Activated naive CD4-positive, alpha-beta T cell treated with anti-CD3 and anti-CD28 coated beads for 36 hours (primary cell): ENCODE measurements at regions of chr19 and their contacts with region 1.

Region 1: GRCh38 chr19:45692187-45693105 is at the start of gene QPCTL:
- DNase-seq: peak; percentile 98
- H3K4me3 Mint-ChIP-seq: peak within 1 kb of the TSS; percentile 97
- H3K27ac Mint-ChIP-seq: peak within 1 kb of the TSS; percentile 98
- H3K4me1 Mint-ChIP-seq: peaks cover 34% of the 10 kb centered on the region
- H3K27me3 Mint-ChIP-seq: no peaks in the 10 kb centered on the region
- total RNA-seq, gene QPCTL: 12.0 to 14.1 TPM

Region 2: DNA sequence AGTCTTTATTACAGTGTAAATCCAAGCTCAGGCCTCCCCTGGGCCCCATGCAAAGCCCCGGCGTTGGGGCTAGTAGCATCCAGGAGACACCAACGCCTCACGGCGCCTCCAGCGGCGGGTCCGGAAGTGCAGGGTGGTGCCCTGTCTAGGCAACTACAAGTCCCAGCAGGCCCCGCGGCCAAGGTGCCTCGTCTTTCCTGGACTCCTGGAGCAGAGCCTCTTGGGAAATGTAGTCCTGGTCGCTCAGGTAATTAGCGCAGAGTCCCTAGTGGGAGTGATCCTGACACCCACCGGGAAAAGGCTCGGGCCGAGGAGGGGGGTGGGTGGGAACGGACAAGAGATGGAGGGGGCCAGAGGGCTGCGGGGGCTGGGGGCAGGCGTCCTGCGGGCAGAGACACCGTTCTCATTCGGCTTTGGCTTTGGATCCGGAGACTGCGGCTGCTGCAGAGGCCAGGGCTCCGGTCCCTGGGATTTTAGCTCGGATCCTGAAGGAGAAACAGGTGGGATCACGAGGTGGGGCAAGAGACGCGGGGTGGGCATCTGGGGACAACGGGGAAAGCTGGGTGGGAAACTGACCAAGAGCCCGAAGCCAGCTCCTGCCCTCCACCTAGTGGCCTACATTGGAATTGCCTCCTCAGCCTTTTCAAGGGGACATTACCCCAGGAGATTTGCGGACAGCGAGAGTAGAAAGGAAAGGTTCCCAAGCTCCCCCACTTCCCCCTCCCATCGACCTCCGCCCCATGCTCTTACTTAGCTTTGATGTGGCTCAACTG is 207.0 kb before region 1 on chr19:
- CTCF ChIA-PET with region 1: interaction called, 3 read pairs
- intact Hi-C with region 1: loop called (anchors 1 kb)
- DNase-seq: peak; percentile 99
- H3K4me3 Mint-ChIP-seq: peak overlapping the region; percentile 81
- H3K27ac Mint-ChIP-seq: peak overlapping the region; percentile 46
- H3K4me1 Mint-ChIP-seq: peaks cover 4% of the 10 kb centered on the region
- H3K27me3 Mint-ChIP-seq: no peaks in the 10 kb centered on the region

Region 3: DNA sequence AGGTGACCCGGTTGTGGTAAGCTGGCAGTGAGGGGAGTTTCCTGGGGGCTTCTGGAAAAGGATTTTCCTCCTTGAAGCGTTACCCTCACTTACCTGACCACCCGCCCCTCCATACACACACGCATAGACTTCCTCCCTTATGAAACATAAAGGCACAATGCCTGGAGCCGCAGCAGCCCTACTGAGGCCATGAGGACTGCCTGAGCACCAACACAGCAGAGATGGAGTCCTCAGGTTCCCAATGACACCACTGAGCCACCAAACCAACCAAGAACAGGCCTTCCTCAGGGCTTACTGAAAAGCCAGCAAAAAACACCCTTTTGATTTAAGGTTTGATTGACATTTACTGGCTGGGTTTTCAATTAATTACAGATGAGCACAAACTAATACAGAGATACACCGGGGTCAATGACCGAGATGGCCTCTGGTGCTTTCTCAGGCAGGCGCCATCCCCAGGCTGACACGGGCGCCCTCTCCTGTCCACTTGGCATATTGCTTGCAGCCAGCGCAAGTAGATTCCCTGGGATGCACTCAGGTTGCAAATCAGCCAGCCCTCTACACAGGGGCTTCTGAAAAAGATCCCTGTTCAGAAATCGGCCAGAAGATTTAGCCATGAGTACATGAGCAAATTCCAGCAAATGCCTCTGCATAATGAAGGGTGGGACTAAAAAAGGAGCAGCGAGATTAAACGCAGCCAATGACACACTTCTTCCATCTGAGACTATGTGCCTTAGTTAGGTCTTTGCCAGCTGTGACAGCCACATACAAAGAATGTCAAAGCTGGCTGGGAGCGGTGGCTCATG is 122.6 kb before region 1 on chr19:
- CTCF ChIA-PET with region 1: no interaction called
- intact Hi-C with region 1: no loop called
- DNase-seq: peak; percentile 80
- H3K4me3 Mint-ChIP-seq: no peak overlapping the region
- H3K27ac Mint-ChIP-seq: peak overlapping the region; percentile 59
- H3K4me1 Mint-ChIP-seq: peaks cover 14% of the 10 kb centered on the region
- H3K27me3 Mint-ChIP-seq: no peaks in the 10 kb centered on the region

Region 4: GRCh38 chr19:45584332-45585157 is 107.9 kb before region 1 on chr19 and contains the start of gene OPA3:
- CTCF ChIA-PET with region 1: no interaction called
- intact Hi-C with region 1: loop called (anchors 1 kb)
- DNase-seq: peak; percentile 100
- H3K4me3 Mint-ChIP-seq: peak within 1 kb of the TSS; percentile 89
- H3K27ac Mint-ChIP-seq: peak within 1 kb of the TSS; percentile 98
- H3K4me1 Mint-ChIP-seq: peaks cover 14% of the 10 kb centered on the region
- H3K27me3 Mint-ChIP-seq: peaks cover 3% of the 10 kb centered on the region
- total RNA-seq, gene OPA3: 12.4 to 12.7 TPM

Region 5: GRCh38 chr19:45710356-45711130 is 18.1 kb after region 1 on chr19:
- CTCF ChIA-PET with region 1: interaction called, 28 read pairs
- intact Hi-C with region 1: no loop called
- DNase-seq: no peak
- H3K4me3 Mint-ChIP-seq: no peak overlapping the region
- H3K27ac Mint-ChIP-seq: no peak overlapping the region
- H3K4me1 Mint-ChIP-seq: peaks cover 22% of the 10 kb centered on the region
- H3K27me3 Mint-ChIP-seq: no peaks in the 10 kb centered on the region

Region 6: GRCh38 chr19:45770192-45771101 is 78.0 kb after region 1 on chr19:
- CTCF ChIA-PET with region 1: no interaction called
- intact Hi-C with region 1: loop called (anchors 1 kb)
- DNase-seq: peak; percentile 89
- H3K4me3 Mint-ChIP-seq: peak overlapping the region; percentile 81
- H3K27ac Mint-ChIP-seq: no peak overlapping the region
- H3K4me1 Mint-ChIP-seq: peaks cover 10% of the 10 kb centered on the region
- H3K27me3 Mint-ChIP-seq: peaks cover 16% of the 10 kb centered on the region

Region 7: DNA sequence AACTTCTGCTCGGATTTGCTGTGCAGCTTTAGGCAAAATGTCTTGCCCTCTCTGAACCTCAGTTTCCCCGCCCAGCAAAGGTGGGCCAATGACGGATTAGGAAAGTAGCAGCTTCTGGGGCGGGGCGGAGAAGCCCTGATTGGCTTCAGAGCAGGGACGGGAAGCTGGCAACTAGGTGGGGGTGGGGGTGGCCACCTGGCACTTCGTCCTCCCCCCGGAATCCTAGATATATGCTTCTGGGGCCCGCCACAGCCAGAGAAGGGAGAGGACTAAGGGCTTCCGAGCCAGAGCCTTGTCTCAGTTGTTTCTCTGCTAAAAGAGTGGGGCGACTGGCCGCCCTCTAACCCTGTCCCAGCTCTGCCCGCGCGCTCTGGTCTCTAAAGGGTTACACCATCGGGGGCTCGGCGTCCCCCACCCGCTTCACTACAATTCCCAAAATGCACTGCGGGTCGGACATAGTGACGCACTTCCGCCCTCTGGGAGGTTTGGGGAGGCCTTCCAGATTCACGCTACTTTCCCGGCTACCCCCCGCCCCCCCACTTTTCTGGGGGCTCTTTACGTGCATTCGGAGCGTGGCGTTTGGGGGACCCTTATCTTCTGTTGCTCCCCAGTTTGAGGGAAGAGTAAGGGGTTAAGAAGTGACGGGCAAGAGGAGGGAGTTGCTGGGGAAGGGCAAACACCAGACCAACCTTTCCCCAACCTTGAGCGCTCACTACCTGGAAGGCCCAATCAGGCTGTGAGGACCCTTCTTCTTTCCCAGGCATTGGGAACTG is 194.2 kb after region 1 on chr19:
- CTCF ChIA-PET with region 1: no interaction called
- intact Hi-C with region 1: loop called (anchors 1 kb)
- DNase-seq: peak; percentile 98
- H3K4me3 Mint-ChIP-seq: peak overlapping the region; percentile 94
- H3K27ac Mint-ChIP-seq: peak overlapping the region; percentile 95
- H3K4me1 Mint-ChIP-seq: peaks cover 25% of the 10 kb centered on the region
- H3K27me3 Mint-ChIP-seq: no peaks in the 10 kb centered on the region